Esophagus muscularis mucosa (tissue), 4 donors: ENCODE measurements at regions of chr7 and their contacts with region 1.

Region 1: DNA sequence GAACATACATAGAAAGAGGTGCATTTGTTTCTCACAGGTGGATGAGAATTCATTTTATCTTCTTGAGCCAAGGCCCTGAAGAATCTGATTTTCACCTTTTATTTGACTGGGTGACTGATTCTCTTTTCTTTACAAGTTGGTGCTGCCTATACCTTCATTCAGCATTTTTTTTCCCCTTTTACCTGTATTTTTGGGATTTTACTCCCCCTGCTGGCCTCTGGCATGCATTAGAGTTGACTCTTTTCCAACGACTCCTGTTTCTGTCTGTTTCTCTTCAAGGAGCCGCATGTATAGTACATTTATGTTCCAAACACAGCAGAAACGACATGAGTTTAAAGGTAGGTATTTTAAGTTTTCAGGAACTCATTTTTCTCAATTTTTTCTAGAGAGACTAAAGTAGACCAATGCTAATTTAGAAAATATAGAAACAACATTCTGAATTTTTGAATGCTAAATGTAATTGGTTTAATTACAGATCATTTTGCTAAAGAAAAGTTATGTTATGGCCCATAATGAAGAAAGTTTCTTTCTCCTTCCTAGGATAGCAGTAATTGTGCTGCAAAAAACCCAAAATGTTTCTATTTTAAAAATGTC is 149.8 kb upstream of the HDAC9 start:
- DNase-seq: no peak
- H3K4me3 ChIP-seq: no peak overlapping the region
- H3K27ac ChIP-seq: no peak overlapping the region
- H3K4me1 ChIP-seq: peaks cover 0 to 43% (median 21%) of the 10 kb centered on the region in 4 donors
- H3K27me3 ChIP-seq: no peaks in the 10 kb centered on the region
- CTCF ChIP-seq: peak; percentile 74 to 85 (median 82)
- EP300 ChIP-seq: no peak
- POLR2A ChIP-seq: no peak

Region 2: GRCh38 chr7:17971411-17971810 is 374.3 kb before region 1 on chr7:
- intact Hi-C with region 1: loop called (anchors 10 kb)
- DNase-seq: no peak
- H3K4me3 ChIP-seq: no peak overlapping the region
- H3K27ac ChIP-seq: no peak overlapping the region
- H3K4me1 ChIP-seq: no peaks in the 10 kb centered on the region
- H3K27me3 ChIP-seq: no peaks in the 10 kb centered on the region
- CTCF ChIP-seq: peak; percentile 22 to 38 (median 26)
- EP300 ChIP-seq: no peak
- POLR2A ChIP-seq: no peak

Region 3: GRCh38 chr7:18064242-18064838 is 281.4 kb before region 1 on chr7:
- intact Hi-C with region 1: loop called (anchors 5 kb)
- DNase-seq: no peak
- H3K4me3 ChIP-seq: no peak overlapping the region
- H3K27ac ChIP-seq: no peak overlapping the region
- H3K4me1 ChIP-seq: no peaks in the 10 kb centered on the region
- H3K27me3 ChIP-seq: no peaks in the 10 kb centered on the region
- CTCF ChIP-seq: peak; percentile 48 to 75 (median 58)
- EP300 ChIP-seq: no peak
- POLR2A ChIP-seq: no peak

Region 4: DNA sequence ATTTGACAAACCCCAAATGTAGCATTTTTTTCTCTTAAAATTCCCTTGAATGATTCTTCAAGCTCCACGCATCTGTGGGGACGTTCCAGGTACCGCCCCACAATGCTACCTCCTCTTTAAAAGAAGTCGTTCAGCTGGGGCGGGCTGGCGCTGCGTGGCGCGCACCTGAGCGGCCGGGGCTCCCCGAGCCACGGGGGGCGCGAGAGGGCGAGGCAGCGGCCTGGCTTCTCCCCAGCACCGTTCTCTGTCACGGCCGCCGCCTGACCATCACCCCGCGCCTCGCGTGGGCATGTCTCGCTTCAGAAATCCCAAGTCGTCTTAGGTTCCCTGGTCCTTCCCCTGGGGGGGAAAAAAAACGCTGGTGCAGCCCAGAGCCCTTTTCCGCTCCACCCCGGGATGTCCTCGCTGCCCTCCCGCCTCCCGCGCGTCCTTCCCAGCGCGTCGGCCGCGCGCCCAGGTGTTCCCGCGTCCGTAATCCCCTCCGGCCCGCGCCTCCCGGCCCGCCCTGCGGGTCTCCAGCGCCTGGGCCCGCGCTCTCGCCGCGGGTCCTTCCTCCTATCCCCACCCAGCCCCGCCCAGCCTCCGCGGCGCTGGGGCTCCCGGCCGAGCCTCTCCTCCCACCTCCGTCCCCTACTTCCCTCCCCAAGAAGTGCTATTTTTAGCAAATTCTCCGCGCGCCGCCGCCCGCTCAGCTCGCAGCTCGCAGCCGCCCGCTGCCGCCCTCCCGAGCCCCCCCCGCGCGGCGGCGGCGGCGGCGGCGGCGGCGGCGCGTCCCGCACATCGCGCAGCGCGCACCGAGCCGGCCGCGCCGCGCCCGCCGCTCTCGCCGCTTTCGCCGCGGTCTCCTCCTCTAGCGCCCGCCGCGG is 259.3 kb before region 1 on chr7:
- intact Hi-C with region 1: loop called (anchors 5 kb)
- DNase-seq: no peak
- H3K4me3 ChIP-seq: peak overlapping the region; percentile 85 to 94 (median 93)
- H3K27ac ChIP-seq: peak overlapping the region; percentile 84 to 91 (median 88)
- H3K4me1 ChIP-seq: peaks cover 6 to 41% (median 34%) of the 10 kb centered on the region in 4 donors
- H3K27me3 ChIP-seq: no peaks in the 10 kb centered on the region
- CTCF ChIP-seq: peak; percentile 10 to 48 (median 24)
- EP300 ChIP-seq: no peak
- POLR2A ChIP-seq: no peak

Region 5: GRCh38 chr7:18151422-18151821 is 194.3 kb before region 1 on chr7:
- intact Hi-C with region 1: no loop called
- DNase-seq: no peak
- H3K4me3 ChIP-seq: no peak overlapping the region
- H3K27ac ChIP-seq: no peak overlapping the region
- H3K4me1 ChIP-seq: peaks cover 3 to 44% (median 27%) of the 10 kb centered on the region in 4 donors
- H3K27me3 ChIP-seq: no peaks in the 10 kb centered on the region
- CTCF ChIP-seq: no peak
- EP300 ChIP-seq: no peak
- POLR2A ChIP-seq: no peak

Region 6: DNA sequence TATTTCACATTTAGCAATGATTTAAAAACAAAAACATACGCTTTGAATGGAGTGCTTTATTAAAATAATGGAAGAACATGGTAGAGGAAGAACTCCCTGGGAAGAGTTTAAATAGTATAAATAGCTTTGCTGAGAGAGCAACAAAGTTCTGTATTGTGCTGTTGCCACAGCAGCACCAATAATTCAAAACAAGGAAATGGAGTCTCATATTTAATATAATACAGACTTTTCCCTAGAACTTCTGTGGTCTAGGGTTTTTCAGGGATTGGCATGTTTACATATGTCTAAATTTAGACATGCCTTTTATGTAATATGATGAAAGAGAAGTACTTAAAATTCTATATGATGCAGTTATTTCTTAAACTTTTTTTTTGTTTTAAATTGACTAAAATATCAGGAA is 67.4 kb before region 1 on chr7:
- intact Hi-C with region 1: no loop called
- DNase-seq: no peak
- H3K4me3 ChIP-seq: no peak overlapping the region
- H3K27ac ChIP-seq: no peak overlapping the region
- H3K4me1 ChIP-seq: peaks cover 0 to 14% (median 3%) of the 10 kb centered on the region in 4 donors
- H3K27me3 ChIP-seq: no peaks in the 10 kb centered on the region
- CTCF ChIP-seq: no peak
- EP300 ChIP-seq: no peak
- POLR2A ChIP-seq: no peak

Region 7: GRCh38 chr7:18290223-18290622 is 55.5 kb before region 1 on chr7:
- intact Hi-C with region 1: no loop called
- DNase-seq: no peak
- H3K4me3 ChIP-seq: peak overlapping the region in 2 of 4 donors; percentile 8 to 20
- H3K27ac ChIP-seq: peak overlapping the region in 1 of 4 donors; percentile 8
- H3K4me1 ChIP-seq: peaks cover 15 to 69% (median 58%) of the 10 kb centered on the region in 4 donors
- H3K27me3 ChIP-seq: no peaks in the 10 kb centered on the region
- CTCF ChIP-seq: no peak
- EP300 ChIP-seq: no peak
- POLR2A ChIP-seq: no peak